ENCODE measurements at regions of chr2 and their contacts with region 1.

Region 1: GRCh38 chr2:222805541-222806304 is 55.1 kb upstream of the ACSL3 start:
- DNase-seq: no peak
- H3K4me3 ChIP-seq: no peak overlapping the region
- H3K27ac ChIP-seq: no peak overlapping the region
- H3K4me1 ChIP-seq: peaks cover 0 to 4% of the 10 kb centered on the region in 2 donors
- H3K27me3 ChIP-seq: no peaks in the 10 kb centered on the region
- CTCF ChIP-seq: no peak
- POLR2A ChIP-seq: no peak

Region 2: DNA sequence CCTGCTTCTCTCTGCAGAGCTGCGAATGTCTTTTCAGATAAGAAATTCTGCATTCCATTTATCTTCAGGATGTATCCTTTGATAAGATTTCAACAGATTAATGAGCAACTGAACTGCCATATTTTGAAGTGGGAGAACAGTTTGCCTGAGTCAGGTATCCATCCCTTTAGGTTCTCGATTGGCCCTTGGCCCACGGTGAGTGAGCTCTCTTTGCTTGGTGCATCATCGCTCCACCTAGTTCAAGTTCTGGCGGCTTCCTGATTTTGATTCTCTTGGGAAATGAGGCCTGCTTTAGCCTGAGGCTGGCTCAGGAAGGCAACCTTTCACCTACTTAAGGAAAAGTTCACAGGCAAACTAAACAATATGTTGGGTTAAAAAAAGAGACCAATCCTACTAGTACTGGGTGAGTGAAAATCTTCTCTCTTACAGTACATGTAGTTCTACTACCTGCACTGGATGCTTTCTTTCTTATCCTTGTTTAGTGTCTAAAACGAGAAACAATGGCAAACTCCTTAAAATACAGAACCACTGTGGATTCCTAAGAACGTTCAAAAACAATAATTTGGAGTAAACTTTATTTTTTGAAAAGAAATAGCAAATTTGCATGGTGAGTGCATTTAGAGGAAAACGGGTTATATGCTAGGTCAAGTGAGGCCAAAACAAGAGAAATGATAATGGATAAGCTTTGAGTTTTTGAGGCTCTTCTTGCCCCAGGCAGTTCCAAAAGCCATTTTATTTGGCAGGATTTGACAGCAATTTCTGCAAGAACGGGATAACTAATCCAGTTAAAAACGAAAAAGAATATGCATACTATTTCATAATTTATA is 54.3 kb after region 1 on chr2:
- intact Hi-C with region 1: loop called (anchors 10 kb)
- DNase-seq: peak; percentile 53 to 64
- H3K4me3 ChIP-seq: peak overlapping the region in 1 of 3 donors; percentile 70
- H3K27ac ChIP-seq: peak overlapping the region; percentile 27 to 95 (median 95)
- H3K4me1 ChIP-seq: peaks cover 21 to 43% of the 10 kb centered on the region in 2 donors
- H3K27me3 ChIP-seq: no peaks in the 10 kb centered on the region
- CTCF ChIP-seq: no peak
- POLR2A ChIP-seq: peak in 1 of 2 donors; percentile 6

Measured in thyroid gland (tissue), 4 donors.